Endothelial cell of umbilical vein (primary cell): ENCODE measurements at regions of chr7 and their contacts with region 1.

Region 1: GRCh38 chr7:123682690-123683089 is 27.0 kb downstream of the LMOD2 start:
- DNase-seq: peak; percentile 72
- H3K4me3 ChIP-seq: no peak overlapping the region
- H3K27ac ChIP-seq: no peak overlapping the region
- H3K4me1 ChIP-seq: no peaks in the 10 kb centered on the region
- H3K27me3 ChIP-seq: no peaks in the 10 kb centered on the region
- CTCF ChIP-seq: peak; percentile 25 to 41
- POLR2A ChIP-seq: no peak

Region 2: GRCh38 chr7:123643495-123644441 is 38.9 kb before region 1 on chr7:
- CTCF ChIA-PET with region 1: interaction called, 21 read pairs
- POLR2A ChIA-PET with region 1: no interaction called
- dilution Hi-C with region 1: no loop called
- intact Hi-C with region 1: no loop called
- DNase-seq: peak; percentile 96
- H3K4me3 ChIP-seq: peak overlapping the region in 1 of 3 experiments; percentile 9
- H3K27ac ChIP-seq: peak overlapping the region; percentile 10
- H3K4me1 ChIP-seq: peaks cover 21% of the 10 kb centered on the region
- H3K27me3 ChIP-seq: no peaks in the 10 kb centered on the region
- CTCF ChIP-seq: no peak
- POLR2A ChIP-seq: no peak

Region 3: DNA sequence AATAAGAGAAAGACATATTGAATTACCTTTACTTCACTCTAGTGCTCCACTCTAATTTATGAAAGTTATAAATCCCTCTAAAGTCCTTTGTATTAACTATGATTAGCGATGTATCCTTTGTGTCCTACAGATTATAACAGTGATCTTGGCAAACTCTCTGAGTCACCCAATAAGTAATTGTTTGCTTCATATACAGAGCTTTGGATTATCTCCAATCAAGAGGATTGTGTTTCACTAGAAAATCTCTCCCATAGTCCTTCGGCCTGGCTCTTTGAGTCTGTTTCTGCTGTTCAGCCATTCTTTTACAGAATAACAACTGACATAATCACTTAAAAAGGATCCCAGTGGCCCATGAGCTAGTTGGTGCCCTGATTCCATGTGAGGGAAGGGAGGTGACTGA is 17.5 kb before region 1 on chr7:
- CTCF ChIA-PET with region 1: interaction called, 10 read pairs
- POLR2A ChIA-PET with region 1: no interaction called
- dilution Hi-C with region 1: no loop called
- intact Hi-C with region 1: no loop called
- DNase-seq: no peak
- H3K4me3 ChIP-seq: no peak overlapping the region
- H3K27ac ChIP-seq: no peak overlapping the region
- H3K4me1 ChIP-seq: no peaks in the 10 kb centered on the region
- H3K27me3 ChIP-seq: peaks cover 6 to 7% of the 10 kb centered on the region in 2 experiments
- CTCF ChIP-seq: no peak
- POLR2A ChIP-seq: no peak

Region 4: GRCh38 chr7:123748734-123749536 is 66.2 kb after region 1 on chr7 and contains the start of gene WASL:
- CTCF ChIA-PET with region 1: interaction called, 14 read pairs
- POLR2A ChIA-PET with region 1: no interaction called
- dilution Hi-C with region 1: no loop called
- intact Hi-C with region 1: no loop called
- DNase-seq: peak; percentile 89
- H3K4me3 ChIP-seq: peak within 1 kb of the TSS; percentile 93 to 98 (median 98)
- H3K27ac ChIP-seq: peak within 1 kb of the TSS; percentile 71
- H3K4me1 ChIP-seq: peaks cover 46% of the 10 kb centered on the region
- H3K27me3 ChIP-seq: no peaks in the 10 kb centered on the region
- CTCF ChIP-seq: no peak
- POLR2A ChIP-seq: peak; percentile 87
- total RNA-seq, gene WASL: 22.1 and 24.0 TPM in 2 replicates

Region 5: GRCh38 chr7:123871998-123872867 is 189.5 kb after region 1 on chr7:
- CTCF ChIA-PET with region 1: interaction called, 40 read pairs
- POLR2A ChIA-PET with region 1: no interaction called
- dilution Hi-C with region 1: no loop called
- intact Hi-C with region 1: loop called (anchors 2 kb)
- DNase-seq: peak; percentile 74
- H3K4me3 ChIP-seq: no peak overlapping the region
- H3K27ac ChIP-seq: no peak overlapping the region
- H3K4me1 ChIP-seq: no peaks in the 10 kb centered on the region
- H3K27me3 ChIP-seq: no peaks in the 10 kb centered on the region
- CTCF ChIP-seq: peak; percentile 53 to 67
- POLR2A ChIP-seq: no peak

Region 6: GRCh38 chr7:123966936-123967335 is 284.2 kb after region 1 on chr7:
- CTCF ChIA-PET with region 1: no interaction called
- POLR2A ChIA-PET with region 1: no interaction called
- dilution Hi-C with region 1: no loop called
- intact Hi-C with region 1: no loop called
- DNase-seq: peak; percentile 3
- H3K4me3 ChIP-seq: no peak overlapping the region
- H3K27ac ChIP-seq: no peak overlapping the region
- H3K4me1 ChIP-seq: no peaks in the 10 kb centered on the region
- H3K27me3 ChIP-seq: no peaks in the 10 kb centered on the region
- CTCF ChIP-seq: no peak
- POLR2A ChIP-seq: no peak